Activated CD4-positive, alpha-beta memory T cell treated with anti-CD3 and anti-CD28 coated beads for 36 hours (primary cell): ENCODE measurements at regions of chr5 and their contacts with region 1.

Region 1: GRCh38 chr5:180689071-180689694 is 39.8 kb upstream of the FLT4 start:
- DNase-seq: peak; percentile 58
- H3K4me3 Mint-ChIP-seq: peak overlapping the region; percentile 30
- H3K27ac Mint-ChIP-seq: peak overlapping the region; percentile 61
- H3K4me1 Mint-ChIP-seq: peaks cover 33% of the 10 kb centered on the region
- H3K27me3 Mint-ChIP-seq: peaks cover 9% of the 10 kb centered on the region

Region 2: DNA sequence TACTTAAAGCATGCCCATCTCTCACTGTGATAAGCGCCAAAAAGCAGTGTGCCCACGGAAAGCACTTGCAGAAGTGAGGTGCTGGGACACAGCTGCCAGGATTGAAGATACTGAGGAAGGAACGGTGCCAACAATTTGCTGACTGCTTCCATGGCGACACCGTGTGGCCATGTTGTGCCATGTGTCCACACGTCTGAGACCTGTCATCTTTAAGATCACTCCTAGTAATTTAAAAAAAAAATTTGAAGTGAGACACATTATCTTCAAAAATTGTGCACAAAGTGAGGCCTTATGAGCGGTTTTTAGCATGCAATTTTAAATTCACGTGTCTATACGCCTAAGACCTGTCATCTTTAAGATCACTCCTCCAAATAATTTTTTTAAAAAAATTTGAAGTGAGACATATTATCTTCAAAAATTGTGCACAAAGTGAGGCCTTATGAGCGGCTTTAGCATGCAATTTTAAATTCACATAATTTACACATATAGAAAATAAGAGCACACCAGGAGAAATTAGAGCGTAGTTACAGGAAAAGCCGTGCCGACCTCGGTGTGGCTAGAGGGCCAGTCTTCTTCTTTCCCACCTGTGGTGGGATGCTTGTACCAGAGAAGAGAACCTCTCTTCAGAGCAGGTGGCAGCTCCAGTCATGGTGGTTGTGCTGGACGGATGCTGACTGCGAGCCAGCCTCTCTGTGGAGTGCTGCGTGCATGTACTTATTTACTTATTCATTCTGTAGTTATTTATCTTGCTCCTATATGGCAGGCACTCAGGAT is 18.4 kb before region 1 on chr5:
- CTCF ChIA-PET with region 1: interaction called, 3 read pairs
- POLR2A ChIA-PET with region 1: no interaction called
- intact Hi-C with region 1: loop called (anchors 2 kb)
- DNase-seq: peak; percentile 69
- H3K4me3 Mint-ChIP-seq: peak overlapping the region; percentile 13
- H3K27ac Mint-ChIP-seq: no peak overlapping the region
- H3K4me1 Mint-ChIP-seq: peaks cover 12% of the 10 kb centered on the region
- H3K27me3 Mint-ChIP-seq: peaks cover 10% of the 10 kb centered on the region